HCT116 (cell line): ENCODE measurements at regions of chr16 and their contacts with region 1.

Region 1: GRCh38 chr16:81891736-81892357 is 112.8 kb downstream of the PLCG2 start:
- DNase-seq: no peak
- ATAC-seq: no peak
- H3K4me3 ChIP-seq: no peak overlapping the region
- H3K27ac ChIP-seq: no peak overlapping the region
- H3K4me1 ChIP-seq: no peaks in the 10 kb centered on the region
- H3K27me3 ChIP-seq: no peaks in the 10 kb centered on the region
- CTCF ChIP-seq: no peak
- POLR2A ChIP-seq: no peak
- RAD21 ChIP-seq: no peak

Region 2: GRCh38 chr16:81932668-81933067 is 40.8 kb after region 1 on chr16:
- CTCF ChIA-PET with region 1: interaction called, 3 read pairs
- POLR2A ChIA-PET with region 1: no interaction called
- RAD21 ChIA-PET with region 1: no interaction called
- intact Hi-C with region 1: loop called (anchors 2 kb)
- DNase-seq: no peak
- ATAC-seq: peak; percentile 65
- H3K4me3 ChIP-seq: no peak overlapping the region
- H3K27ac ChIP-seq: no peak overlapping the region
- H3K4me1 ChIP-seq: peaks cover 12 to 14% of the 10 kb centered on the region in 2 experiments
- H3K27me3 ChIP-seq: no peaks in the 10 kb centered on the region
- CTCF ChIP-seq: peak; percentile 8 to 32 (median 26); a peak in 4 of 6 replicates
- POLR2A ChIP-seq: no peak
- RAD21 ChIP-seq: peak; percentile 30